ENCODE measurements at regions of chr5 and their contacts with region 1.

Region 1: DNA sequence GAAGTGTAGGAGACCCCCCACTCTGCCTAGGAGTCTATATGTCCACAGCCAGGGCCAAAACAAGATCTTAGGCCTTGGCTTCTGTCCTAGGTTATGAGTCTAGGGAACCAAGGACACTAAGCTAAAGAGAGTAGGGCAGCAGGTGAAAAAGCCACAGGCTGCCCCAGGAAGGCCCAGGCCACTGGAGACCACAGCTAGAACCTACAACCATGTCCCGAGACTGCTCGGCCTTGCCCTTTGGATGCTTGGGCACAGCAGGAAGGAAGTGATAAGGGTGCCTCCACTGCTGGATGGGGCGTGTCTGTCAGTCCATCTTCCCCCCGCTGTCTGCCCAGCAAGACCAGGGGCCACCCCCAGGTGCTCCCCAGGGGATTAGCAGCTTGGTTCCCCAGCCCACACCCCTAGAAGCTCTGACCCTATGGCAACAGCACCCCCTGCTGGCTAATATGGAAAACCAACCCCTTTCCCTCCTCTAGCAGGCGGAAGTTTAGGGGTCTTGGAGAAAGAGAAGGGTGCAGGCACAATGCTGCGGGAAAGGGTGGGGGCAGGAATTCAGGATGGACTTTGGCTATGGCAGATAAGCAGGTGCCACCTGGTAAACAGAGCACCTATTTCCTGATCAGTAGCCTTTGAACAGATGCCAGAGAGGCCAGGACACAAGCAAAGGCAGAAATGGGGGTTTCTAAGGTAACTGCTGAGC is 10.5 kb upstream of the IRF1 start:
- DNase-seq: peak; percentile 57 to 67
- H3K4me3 ChIP-seq: no peak overlapping the region
- H3K27ac ChIP-seq: peak overlapping the region in 1 of 3 donors; percentile 41
- H3K4me1 ChIP-seq: peaks cover 0 to 25% of the 10 kb centered on the region in 2 donors
- H3K27me3 ChIP-seq: no peaks in the 10 kb centered on the region
- CTCF ChIP-seq: peak; percentile 62 to 93 (median 81)
- POLR2A ChIP-seq: no peak

Region 2: DNA sequence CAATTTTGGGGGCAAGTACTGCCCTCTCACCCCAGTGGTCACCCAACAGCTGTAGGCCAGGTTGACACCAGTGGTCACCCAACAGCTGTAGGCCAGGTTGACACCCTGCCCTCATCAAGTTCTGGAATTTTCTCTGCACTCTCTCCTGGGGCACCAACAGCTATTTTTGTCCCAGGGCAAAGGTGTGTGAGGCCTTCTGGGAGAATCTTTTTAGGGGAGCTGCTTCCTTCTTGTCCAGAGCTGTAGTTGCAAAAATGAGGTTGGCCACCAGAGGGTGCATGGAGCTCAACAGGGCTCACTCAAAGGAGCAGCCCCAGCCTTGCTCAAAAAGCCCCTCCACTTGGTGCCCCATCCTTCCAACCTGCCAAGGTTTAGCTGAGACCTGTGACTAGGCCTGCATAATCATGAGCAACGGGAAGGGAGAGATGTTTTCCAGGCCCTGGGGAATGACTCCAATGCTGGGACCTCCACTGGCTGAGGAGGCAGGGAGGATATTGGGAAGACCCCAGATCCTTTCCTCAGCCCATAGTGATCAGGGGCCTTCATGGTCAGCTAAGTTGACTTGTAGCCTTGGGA is 262.8 kb before region 1 on chr5:
- intact Hi-C with region 1: loop called (anchors 10 kb)
- DNase-seq: peak; percentile 73 to 75
- H3K4me3 ChIP-seq: no peak overlapping the region
- H3K27ac ChIP-seq: no peak overlapping the region
- H3K4me1 ChIP-seq: no peaks in the 10 kb centered on the region
- H3K27me3 ChIP-seq: no peaks in the 10 kb centered on the region
- CTCF ChIP-seq: peak; percentile 46 to 87 (median 72)
- POLR2A ChIP-seq: no peak

Region 3: DNA sequence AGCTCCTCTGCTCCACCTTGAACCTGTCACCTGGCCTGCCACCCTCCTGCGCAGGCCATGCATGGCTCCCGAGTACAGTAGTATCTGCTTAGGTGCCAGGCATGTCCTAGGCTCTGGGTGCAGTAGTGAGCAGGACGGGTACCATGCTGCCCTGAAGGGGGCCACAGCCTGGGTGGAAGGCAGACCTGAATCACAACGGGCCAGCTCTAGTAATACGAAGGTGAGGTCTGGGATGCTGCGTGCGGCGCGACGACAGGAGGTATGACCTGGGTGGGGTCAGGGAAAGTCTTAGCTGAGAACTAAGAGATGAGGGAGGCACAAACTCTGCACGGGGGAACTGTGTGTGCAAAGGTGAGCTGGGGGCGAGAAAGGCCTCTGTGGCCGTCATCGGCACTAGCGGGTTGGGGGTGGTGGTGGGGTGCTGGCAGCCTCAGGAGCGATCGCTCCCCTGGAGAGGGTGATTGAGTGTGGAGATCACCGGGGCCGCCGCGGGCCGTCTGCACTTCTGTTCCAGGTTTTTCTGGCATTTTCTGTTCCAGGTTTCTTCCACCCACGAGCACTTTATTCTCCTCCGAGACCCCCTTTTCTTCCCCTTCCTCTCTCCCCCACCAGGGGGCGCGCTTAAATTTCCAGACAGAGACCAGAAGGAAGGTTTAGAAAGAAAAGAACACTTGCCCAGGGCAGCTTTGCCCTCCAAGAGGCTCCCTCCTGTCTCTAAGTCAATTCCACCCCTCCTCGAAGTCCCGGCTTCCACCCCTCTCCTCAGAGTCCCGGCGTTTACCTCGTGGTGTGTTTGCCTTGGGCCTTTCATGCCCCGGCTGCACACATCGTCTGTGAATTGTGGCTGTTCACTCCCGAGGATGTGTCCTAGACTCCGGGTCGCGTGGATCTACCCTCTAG is 228.5 kb before region 1 on chr5:
- intact Hi-C with region 1: loop called (anchors 5 kb)
- DNase-seq: peak in 1 of 2 donors; percentile 64
- H3K4me3 ChIP-seq: no peak overlapping the region
- H3K27ac ChIP-seq: no peak overlapping the region
- H3K4me1 ChIP-seq: peaks cover 0 to 19% of the 10 kb centered on the region in 2 donors
- H3K27me3 ChIP-seq: no peaks in the 10 kb centered on the region
- CTCF ChIP-seq: peak; percentile 53 to 93 (median 72)
- POLR2A ChIP-seq: no peak

Region 4: GRCh38 chr5:132372124-132372523 is 129.0 kb before region 1 on chr5:
- intact Hi-C with region 1: no loop called
- DNase-seq: no peak
- H3K4me3 ChIP-seq: no peak overlapping the region
- H3K27ac ChIP-seq: no peak overlapping the region
- H3K4me1 ChIP-seq: peaks cover 7 to 26% of the 10 kb centered on the region in 2 donors
- H3K27me3 ChIP-seq: no peaks in the 10 kb centered on the region
- CTCF ChIP-seq: no peak
- POLR2A ChIP-seq: no peak

Region 5: DNA sequence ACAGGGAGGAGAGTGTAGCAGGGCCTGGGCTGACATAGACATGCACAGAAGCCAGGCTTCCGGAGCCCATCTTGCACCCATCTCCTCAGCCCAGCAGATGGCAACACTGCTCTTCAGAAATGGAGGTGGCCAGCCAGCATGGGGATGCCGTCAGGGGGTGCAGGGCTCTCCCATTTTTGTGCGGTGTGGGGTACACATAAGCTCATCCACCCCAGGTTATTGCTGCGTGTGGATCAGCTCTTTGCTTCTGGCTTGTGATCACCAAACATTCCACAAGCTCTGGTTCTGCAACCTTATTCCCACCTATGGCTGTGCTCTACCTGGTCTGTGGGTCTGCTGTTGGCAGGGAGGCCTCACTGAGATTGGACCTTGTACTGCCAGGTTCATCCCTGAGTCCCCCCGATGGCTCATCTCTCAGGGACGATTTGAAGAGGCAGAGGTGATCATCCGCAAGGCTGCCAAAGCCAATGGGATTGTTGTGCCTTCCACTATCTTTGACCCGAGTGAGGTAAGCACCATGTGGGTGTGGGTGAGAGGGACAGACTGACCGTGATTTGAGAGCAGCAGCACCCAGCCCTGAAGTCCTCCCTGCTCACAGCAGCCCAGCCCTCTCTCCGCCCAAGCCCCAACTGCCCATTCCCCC is 114.3 kb before region 1 on chr5:
- intact Hi-C with region 1: loop called (anchors 2 kb)
- DNase-seq: peak; percentile 66 to 67
- H3K4me3 ChIP-seq: no peak overlapping the region
- H3K27ac ChIP-seq: peak overlapping the region; percentile 89 to 93 (median 92)
- H3K4me1 ChIP-seq: peaks cover 24 to 59% of the 10 kb centered on the region in 2 donors
- H3K27me3 ChIP-seq: no peaks in the 10 kb centered on the region
- CTCF ChIP-seq: peak; percentile 45 to 83 (median 80)
- POLR2A ChIP-seq: no peak

Region 6: GRCh38 chr5:132556763-132557477 is 55.8 kb after region 1 on chr5 and contains the start of gene RAD50:
- intact Hi-C with region 1: no loop called
- DNase-seq: peak; percentile 91 to 92
- H3K4me3 ChIP-seq: peak within 1 kb of the TSS; percentile 38 to 78 (median 53)
- H3K27ac ChIP-seq: peak within 1 kb of the TSS; percentile 69 to 84 (median 75)
- H3K4me1 ChIP-seq: peaks cover 12 to 14% of the 10 kb centered on the region in 2 donors
- H3K27me3 ChIP-seq: no peaks in the 10 kb centered on the region
- CTCF ChIP-seq: no peak
- POLR2A ChIP-seq: peak; percentile 36 to 73
- total RNA-seq, gene RAD50: 34.1 to 40.1 (median 37.5) TPM

Region 7: DNA sequence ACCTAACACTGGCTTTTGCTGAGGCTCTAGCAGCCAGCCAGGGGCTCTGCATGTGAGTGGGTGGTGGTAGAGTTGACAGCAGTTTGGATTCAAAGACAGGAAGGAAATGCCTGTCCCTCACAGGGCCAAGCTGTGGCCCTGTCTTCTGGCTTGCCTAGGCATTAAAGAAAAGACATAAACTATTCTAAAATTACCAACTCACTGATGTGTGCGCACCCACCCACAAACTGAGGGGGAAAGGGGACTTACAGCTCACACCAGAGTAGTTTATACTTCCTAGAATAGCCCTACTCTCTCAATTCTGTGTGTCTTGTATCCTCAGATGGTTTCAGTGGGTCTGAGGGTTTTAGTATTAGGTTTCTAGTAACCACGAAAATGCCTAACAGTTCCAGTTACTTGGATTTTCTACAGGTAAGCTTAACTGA is 138.6 kb after region 1 on chr5:
- intact Hi-C with region 1: no loop called
- DNase-seq: no peak
- H3K4me3 ChIP-seq: no peak overlapping the region
- H3K27ac ChIP-seq: no peak overlapping the region
- H3K4me1 ChIP-seq: no peaks in the 10 kb centered on the region
- H3K27me3 ChIP-seq: no peaks in the 10 kb centered on the region
- CTCF ChIP-seq: no peak
- POLR2A ChIP-seq: no peak

Measured in thyroid gland (tissue), 4 donors.